Naive thymus-derived CD4-positive, alpha-beta T cell (primary cell): ENCODE measurements at regions of chr9 and their contacts with region 1.

Region 1: DNA sequence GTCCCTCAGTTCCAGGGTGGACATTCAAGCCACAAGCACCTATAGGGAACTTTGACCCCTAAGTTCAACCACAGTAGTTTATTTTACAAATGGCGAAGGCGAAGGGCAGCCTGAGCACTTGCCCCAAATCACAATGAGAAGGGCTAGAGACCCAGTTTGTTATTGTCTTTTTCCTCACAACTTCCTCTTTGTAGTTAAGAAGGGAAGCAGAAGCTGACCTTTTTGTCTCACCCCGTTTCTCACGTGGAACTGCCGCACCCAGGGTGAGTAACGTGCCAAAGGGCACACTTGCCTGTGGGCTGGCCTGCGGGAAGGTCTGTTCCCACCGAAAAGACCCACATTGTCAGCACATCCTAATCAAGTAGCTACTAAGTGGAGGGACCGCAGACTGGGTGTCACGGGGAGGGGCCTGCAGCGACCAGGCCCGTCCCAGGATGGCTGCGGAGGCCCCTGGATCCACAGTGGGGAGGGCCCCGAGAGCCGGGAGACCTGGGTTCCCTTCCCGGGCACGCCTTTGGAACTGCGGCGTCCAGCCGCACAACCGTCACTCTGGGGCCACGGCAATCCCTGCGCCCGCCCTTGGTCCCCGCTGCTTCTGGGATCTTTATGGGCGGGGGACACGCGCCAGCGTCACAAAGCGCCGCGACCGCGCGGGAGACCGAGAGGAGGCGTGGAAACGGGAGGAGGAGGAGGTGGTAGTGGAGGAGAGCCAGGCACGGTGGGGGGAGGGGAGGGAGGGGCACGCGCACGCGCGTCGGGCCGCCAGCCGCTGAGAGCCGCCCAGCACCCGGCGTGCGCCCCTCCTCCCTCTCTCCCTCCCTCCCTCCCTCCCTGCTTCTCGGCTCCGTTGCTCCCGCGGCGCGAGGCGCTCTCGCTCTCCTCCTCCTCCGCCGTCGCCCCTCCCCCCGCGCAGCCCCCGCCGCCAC is at the start of gene UBE2R2:
- DNase-seq: peak; percentile 81 to 94 (median 90)
- ATAC-seq: peak; percentile 86
- H3K4me3 ChIP-seq: peak within 1 kb of the TSS; percentile 88
- H3K4me3 Mint-ChIP-seq: peak within 1 kb of the TSS; percentile 83 to 98 (median 93)
- H3K27ac ChIP-seq: peak within 1 kb of the TSS; percentile 96
- H3K27ac Mint-ChIP-seq: peak within 1 kb of the TSS; percentile 91 to 99 (median 97)
- H3K4me1 ChIP-seq: peaks cover 19 to 21% of the 10 kb centered on the region in 2 donors
- H3K4me1 Mint-ChIP-seq: peaks cover 24 to 60% (median 54%) of the 10 kb centered on the region in 7 donors
- H3K27me3 ChIP-seq: no peaks in the 10 kb centered on the region
- H3K27me3 Mint-ChIP-seq: no peaks in the 10 kb centered on the region
- total RNA-seq, gene UBE2R2: 27.2 to 40.8 (median 32.0) TPM

Region 2: GRCh38 chr9:33076358-33077004 is 740.1 kb before region 1 on chr9 and contains the start of gene SMU1:
- CTCF ChIA-PET with region 1: no interaction called
- POLR2A ChIA-PET with region 1: no interaction called
- intact Hi-C with region 1: loop called in 1 of 2 experiments (anchors 5 kb)
- DNase-seq: peak; percentile 82 to 97 (median 95)
- ATAC-seq: peak; percentile 97
- H3K4me3 ChIP-seq: peak within 1 kb of the TSS; percentile 82
- H3K4me3 Mint-ChIP-seq: peak within 1 kb of the TSS; percentile 95 to 100 (median 98)
- H3K27ac ChIP-seq: peak within 1 kb of the TSS; percentile 93
- H3K27ac Mint-ChIP-seq: peak within 1 kb of the TSS; percentile 97 to 100 (median 99)
- H3K4me1 ChIP-seq: peaks cover 16 to 21% of the 10 kb centered on the region in 2 donors
- H3K4me1 Mint-ChIP-seq: peaks cover 17 to 61% (median 48%) of the 10 kb centered on the region in 7 donors
- H3K27me3 ChIP-seq: no peaks in the 10 kb centered on the region
- H3K27me3 Mint-ChIP-seq: no peaks in the 10 kb centered on the region
- total RNA-seq, gene SMU1: 22.3 to 32.9 (median 25.6) TPM

Region 3: DNA sequence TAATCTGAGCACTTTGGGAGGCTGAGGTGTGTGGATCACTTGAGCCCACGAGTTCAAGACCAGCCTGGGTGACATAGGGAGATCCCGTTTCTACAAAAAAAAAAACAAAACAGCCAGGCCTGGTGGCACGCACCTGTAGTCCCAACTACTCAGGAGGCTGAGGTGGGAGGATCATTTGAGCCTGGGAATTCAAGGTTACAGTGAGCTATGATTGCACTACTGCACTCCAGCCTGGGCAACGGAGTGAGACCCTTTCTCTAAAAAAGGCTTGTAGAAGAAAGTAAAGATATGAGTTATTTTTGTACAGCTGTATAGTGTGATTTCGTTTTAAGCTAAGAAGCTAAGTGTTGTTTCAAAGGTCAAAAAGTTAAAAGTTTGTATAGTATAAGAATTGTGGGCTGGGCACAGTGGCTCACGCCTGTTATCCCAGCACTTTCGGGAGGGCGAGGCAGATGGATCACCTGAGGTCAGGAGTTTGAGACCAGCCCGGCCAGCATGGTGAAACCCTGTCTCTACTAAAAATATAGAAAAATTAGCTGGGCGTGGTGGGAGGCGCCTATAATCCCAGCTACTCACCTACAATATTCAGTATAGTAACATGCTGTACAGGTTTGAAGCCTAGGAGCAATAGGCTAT is 19.2 kb after region 1 on chr9:
- CTCF ChIA-PET with region 1: interaction called, 8 read pairs
- POLR2A ChIA-PET with region 1: no interaction called
- intact Hi-C with region 1: loop called in 1 of 2 experiments (anchors 2 kb)
- DNase-seq: no peak
- ATAC-seq: no peak
- H3K4me3 ChIP-seq: no peak overlapping the region
- H3K4me3 Mint-ChIP-seq: peak overlapping the region in 3 of 10 donors; percentile 13 to 43 (median 34)
- H3K27ac ChIP-seq: no peak overlapping the region
- H3K27ac Mint-ChIP-seq: peak overlapping the region in 3 of 9 donors; percentile 38 to 68 (median 46)
- H3K4me1 ChIP-seq: peaks cover 0 to 6% of the 10 kb centered on the region in 2 donors
- H3K4me1 Mint-ChIP-seq: peaks cover 15 to 67% (median 55%) of the 10 kb centered on the region in 7 donors
- H3K27me3 ChIP-seq: no peaks in the 10 kb centered on the region
- H3K27me3 Mint-ChIP-seq: no peaks in the 10 kb centered on the region

Region 4: DNA sequence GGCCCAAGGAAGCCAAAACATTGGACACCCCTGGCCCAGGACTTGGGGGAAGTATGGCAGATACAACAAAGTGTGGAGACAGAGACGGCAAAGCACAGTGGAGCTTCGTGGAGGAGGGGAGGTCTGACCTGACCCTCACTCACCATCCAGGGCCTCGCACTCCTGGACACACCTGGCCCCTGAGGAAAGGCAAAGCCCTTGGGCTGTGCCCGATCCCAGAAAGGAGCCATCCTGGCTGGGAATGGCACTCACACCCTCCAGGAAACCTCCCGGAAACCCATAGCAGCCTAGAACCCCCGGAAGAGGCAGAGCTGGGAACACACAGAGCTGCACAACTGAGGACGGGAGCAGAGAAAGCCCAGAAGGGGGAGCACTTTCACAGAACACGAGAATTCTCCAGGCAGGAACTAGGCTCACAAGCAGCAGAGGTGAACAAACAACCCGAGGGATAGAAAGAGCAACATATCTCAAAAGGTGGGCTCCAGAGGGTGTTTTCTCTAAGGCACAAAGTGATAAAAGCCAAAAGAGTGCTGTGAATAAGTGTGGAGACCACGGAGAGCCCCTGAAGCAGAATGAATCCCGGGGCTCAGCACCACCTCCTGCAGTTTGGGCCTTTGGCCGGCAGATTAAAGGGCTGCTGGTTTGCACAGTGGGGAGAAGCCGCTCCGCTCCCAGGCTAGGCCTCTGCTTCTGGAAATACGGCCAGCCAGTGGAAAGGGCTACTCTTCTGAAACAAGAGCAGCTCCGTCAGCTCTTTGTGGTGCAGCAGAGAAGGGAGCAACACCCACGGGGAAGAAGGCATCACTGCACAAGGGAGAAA is 108.6 kb after region 1 on chr9:
- CTCF ChIA-PET with region 1: interaction called, 16 read pairs
- POLR2A ChIA-PET with region 1: interaction called, 3 read pairs
- intact Hi-C with region 1: loop called (anchors 1 to 5 kb)
- DNase-seq: peak in 3 of 9 donors; percentile 11 to 21 (median 15)
- ATAC-seq: peak; percentile 19
- H3K4me3 ChIP-seq: no peak overlapping the region
- H3K4me3 Mint-ChIP-seq: no peak overlapping the region
- H3K27ac ChIP-seq: no peak overlapping the region
- H3K27ac Mint-ChIP-seq: peak overlapping the region in 8 of 9 donors; percentile 30 to 82 (median 59)
- H3K4me1 ChIP-seq: no peaks in the 10 kb centered on the region
- H3K4me1 Mint-ChIP-seq: peaks cover 0 to 2% (median 0%) of the 10 kb centered on the region in 7 donors
- H3K27me3 ChIP-seq: no peaks in the 10 kb centered on the region
- H3K27me3 Mint-ChIP-seq: no peaks in the 10 kb centered on the region

Region 5: DNA sequence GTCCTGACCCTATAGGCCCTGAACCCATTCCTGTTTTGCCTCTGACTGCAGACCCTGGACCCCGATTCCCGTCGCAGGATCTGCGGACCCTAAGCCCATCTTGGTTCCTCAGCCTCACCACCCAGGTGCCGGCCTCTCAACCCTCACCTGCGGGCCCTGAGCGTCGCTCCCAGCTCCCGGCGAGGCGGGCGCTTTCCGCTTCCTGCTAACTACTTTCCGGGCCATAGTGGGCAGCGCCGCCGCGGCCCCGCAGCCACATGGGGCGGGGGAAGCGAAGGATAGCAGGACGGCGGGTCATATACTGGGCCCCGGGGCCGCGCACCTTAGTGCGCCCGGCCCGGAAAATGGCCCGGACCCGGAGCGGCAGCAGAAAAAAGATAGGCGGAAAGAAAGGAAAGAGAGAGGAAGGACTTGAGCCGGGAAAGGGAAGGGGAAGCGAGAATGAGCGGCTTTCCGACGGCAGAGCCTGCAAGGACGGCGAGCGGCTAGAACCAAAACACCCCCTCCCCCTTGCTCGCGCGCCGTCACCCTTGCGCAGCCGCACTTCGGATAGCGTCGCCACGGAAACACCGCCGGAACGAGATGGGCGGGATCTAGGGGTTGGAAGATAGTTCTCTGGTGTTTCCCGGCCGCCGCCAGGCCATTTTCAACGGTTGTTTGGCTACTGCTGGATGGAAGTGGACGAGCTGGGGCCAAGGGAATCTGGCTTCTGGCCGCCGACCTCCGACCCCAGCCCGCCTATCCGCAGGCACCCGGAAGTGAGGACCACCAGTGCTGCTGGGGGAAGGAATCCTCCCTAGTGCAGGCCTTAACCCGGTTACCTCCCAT is 309.8 kb after region 1 on chr9 and contains the start of gene DCAF12:
- CTCF ChIA-PET with region 1: no interaction called
- POLR2A ChIA-PET with region 1: no interaction called
- intact Hi-C with region 1: loop called in 1 of 2 experiments (anchors 1 kb)
- DNase-seq: peak; percentile 84 to 92 (median 89)
- ATAC-seq: peak; percentile 96
- H3K4me3 ChIP-seq: peak within 1 kb of the TSS; percentile 92
- H3K4me3 Mint-ChIP-seq: peak within 1 kb of the TSS; percentile 92 to 99 (median 98)
- H3K27ac ChIP-seq: peak within 1 kb of the TSS; percentile 93
- H3K27ac Mint-ChIP-seq: peak within 1 kb of the TSS; percentile 94 to 99 (median 98)
- H3K4me1 ChIP-seq: peaks cover 24 to 34% of the 10 kb centered on the region in 2 donors
- H3K4me1 Mint-ChIP-seq: peaks cover 39 to 56% (median 44%) of the 10 kb centered on the region in 7 donors
- H3K27me3 ChIP-seq: no peaks in the 10 kb centered on the region
- H3K27me3 Mint-ChIP-seq: peaks cover 0 to 2% (median 0%) of the 10 kb centered on the region in 5 donors
- total RNA-seq, gene DCAF12: 10.8 to 40.4 (median 28.5) TPM

Region 6: GRCh38 chr9:34328987-34329832 is 512.6 kb after region 1 on chr9 and contains the starts of genes KIF24 and NUDT2:
- CTCF ChIA-PET with region 1: no interaction called
- POLR2A ChIA-PET with region 1: no interaction called
- intact Hi-C with region 1: loop called in 1 of 2 experiments (anchors 1 kb)
- DNase-seq: peak; percentile 89 to 99 (median 96)
- ATAC-seq: peak; percentile 95
- H3K4me3 ChIP-seq: peak within 1 kb of the TSS; percentile 98
- H3K4me3 Mint-ChIP-seq: peak within 1 kb of the TSS; percentile 88 to 97 (median 94)
- H3K27ac ChIP-seq: peak within 1 kb of the TSS; percentile 94
- H3K27ac Mint-ChIP-seq: peak within 1 kb of the TSS; percentile 77 to 98 (median 95)
- H3K4me1 ChIP-seq: peaks cover 3 to 8% of the 10 kb centered on the region in 2 donors
- H3K4me1 Mint-ChIP-seq: peaks cover 11 to 45% (median 29%) of the 10 kb centered on the region in 7 donors
- H3K27me3 ChIP-seq: no peaks in the 10 kb centered on the region
- H3K27me3 Mint-ChIP-seq: no peaks in the 10 kb centered on the region
- total RNA-seq, gene KIF24: 0.11 to 6.0 (median 0.35) TPM
- total RNA-seq, gene NUDT2: 7.5 to 30.0 (median 22.7) TPM

Region 7: DNA sequence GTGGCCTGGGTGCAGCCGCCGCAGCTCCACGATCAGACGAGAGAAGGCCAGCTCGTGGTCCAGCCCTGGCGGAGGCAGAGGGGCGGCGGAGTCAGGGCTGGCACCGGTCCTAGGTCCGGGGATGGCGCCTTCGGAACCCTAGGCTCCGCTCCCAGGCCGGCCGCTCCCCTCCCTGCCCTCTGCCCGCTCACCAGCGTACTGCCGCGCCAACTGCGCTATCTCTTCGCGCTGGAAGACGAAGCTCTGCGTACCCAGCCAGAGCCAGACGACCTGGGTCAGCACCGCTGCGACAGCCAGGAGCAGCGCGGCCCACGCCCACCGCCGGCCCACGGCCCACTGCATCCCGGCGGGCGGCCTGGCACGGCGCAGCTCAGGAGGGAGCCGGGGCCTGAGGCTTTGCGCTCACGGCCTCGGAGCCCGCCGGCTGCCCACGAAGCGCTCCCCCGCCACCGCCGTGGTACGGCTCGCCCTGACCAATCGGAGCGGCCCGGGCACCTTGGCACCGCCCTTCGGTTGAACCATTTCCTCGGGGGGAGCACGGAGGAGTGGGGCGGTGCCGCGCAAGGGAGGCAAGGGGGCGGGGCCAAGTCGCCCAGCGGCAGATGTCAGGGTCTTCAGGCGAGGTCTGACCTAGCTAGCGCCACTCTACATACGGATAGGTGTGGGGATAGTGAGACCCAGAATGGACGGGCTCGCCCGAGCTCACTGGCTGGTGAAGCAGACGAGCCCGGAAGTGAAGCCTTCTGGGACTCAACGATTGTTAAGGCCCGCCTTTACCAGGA is 821.0 kb after region 1 on chr9 and contains the start of gene SIGMAR1:
- CTCF ChIA-PET with region 1: no interaction called
- POLR2A ChIA-PET with region 1: no interaction called
- intact Hi-C with region 1: loop called in 1 of 2 experiments (anchors 10 kb)
- DNase-seq: peak; percentile 88 to 97 (median 95)
- ATAC-seq: peak; percentile 97
- H3K4me3 ChIP-seq: peak within 1 kb of the TSS; percentile 94
- H3K4me3 Mint-ChIP-seq: peak within 1 kb of the TSS; percentile 88 to 93 (median 90)
- H3K27ac ChIP-seq: peak within 1 kb of the TSS; percentile 70
- H3K27ac Mint-ChIP-seq: peak within 1 kb of the TSS; percentile 88 to 98 (median 95)
- H3K4me1 ChIP-seq: peaks cover 21 to 22% of the 10 kb centered on the region in 2 donors
- H3K4me1 Mint-ChIP-seq: peaks cover 26 to 45% (median 37%) of the 10 kb centered on the region in 7 donors
- H3K27me3 ChIP-seq: no peaks in the 10 kb centered on the region
- H3K27me3 Mint-ChIP-seq: no peaks in the 10 kb centered on the region
- total RNA-seq, gene SIGMAR1: 20.7 to 63.8 (median 46.0) TPM